ENCODE measurements at regions of chrX and their contacts with region 1.

Region 1: DNA sequence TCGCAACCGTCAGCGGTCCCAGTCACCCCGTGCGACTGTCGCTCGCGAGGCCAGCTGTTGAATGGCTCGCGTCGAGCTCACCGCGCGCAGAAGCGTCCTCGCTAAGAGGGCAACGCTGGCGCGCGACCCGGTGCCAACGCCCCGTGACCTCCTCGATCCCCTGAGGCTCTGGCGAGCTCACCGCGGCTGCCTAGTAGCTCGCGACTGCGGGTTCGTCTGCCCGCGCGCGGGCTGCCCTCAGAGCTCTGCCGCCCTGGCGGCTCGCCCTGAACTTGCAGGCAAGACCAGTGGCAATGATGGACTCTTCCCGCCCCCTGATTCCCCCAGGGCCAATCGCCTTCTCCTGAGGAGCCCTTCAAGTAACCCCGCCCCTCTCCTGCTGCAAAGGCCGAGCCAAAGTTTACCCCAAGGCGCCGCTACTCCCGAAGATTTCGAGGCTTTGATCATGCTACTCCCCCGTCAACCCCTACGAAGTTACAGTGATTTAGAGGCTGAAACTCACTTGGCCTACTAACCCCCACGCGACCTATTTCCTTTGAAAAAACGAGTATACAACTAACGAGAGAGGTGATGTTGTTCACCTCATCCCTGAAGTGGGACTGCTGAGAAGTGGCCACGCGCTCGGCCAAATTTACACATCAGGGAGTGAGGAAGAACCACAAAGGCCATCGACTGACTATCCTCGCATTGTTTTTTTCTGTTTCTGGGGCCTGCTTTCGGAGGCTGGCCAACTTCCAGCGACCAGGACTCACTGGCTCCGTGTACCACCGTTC is 37.5 kb downstream of the PGRMC1 start:
- DNase-seq: no peak
- H3K4me3 ChIP-seq: no peak overlapping the region
- H3K27ac ChIP-seq: no peak overlapping the region
- H3K4me1 ChIP-seq: no peaks in the 10 kb centered on the region
- H3K27me3 ChIP-seq: no peaks in the 10 kb centered on the region
- CTCF ChIP-seq: no peak

Region 2: GRCh38 chrX:119130911-119131310 is 142.7 kb before region 1 on chrX:
- CTCF ChIA-PET with region 1: interaction called, 10 read pairs
- POLR2A ChIA-PET with region 1: no interaction called
- intact Hi-C with region 1: no loop called
- DNase-seq: no peak
- H3K4me3 ChIP-seq: no peak overlapping the region
- H3K27ac ChIP-seq: no peak overlapping the region
- H3K4me1 ChIP-seq: peaks cover 7% of the 10 kb centered on the region
- H3K27me3 ChIP-seq: no peaks in the 10 kb centered on the region
- CTCF ChIP-seq: no peak